ENCODE measurements at regions of chrX and their contacts with region 1.

Region 1: GRCh38 chrX:2690856-2691542 is at the start of gene CD99:
- DNase-seq: peak; percentile 94
- ATAC-seq: peak; percentile 96 to 97
- total RNA-seq, gene CD99: 242 to 317 TPM

Region 2: DNA sequence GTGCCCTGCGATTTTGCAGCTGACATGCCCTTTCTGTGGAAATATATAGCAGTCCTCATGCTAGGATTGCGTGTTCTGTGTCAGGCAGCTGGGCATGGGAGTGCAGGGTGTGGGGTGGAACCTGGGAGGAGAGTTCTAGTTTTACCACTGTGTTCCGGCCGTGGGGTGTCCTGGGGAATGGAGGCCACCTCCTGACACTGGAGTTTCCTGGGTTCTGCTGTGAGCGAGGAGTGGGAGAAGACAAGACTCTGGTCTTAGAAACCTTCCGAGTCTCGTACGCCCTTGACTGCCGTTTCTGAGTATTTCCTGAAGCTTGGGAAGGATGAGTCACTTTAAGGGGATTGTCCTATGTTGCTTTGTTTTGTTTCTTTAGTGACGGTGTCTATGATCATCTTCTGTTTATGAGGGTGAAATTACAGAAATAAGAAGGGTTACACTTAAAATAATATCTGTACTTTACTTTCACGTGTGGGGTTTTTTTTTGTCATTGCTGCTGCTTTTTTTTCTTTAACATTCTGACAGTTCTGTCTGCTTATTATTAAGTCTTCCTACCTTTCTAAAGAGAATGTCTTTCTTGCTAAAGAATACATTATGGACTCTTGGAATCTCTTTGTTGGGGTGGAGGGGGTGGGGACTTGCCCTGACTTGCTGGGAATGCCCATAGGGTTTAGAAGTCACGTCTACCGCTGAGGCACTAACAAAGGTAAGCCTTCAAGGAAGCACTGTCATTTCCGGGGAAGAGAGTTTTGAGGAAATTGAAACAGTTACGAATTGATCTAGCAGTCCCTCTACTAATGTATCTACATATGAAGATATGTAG is 19.3 kb after region 1 on chrX:
- intact Hi-C with region 1: loop called in 1 of 2 experiments (anchors 1 kb)
- DNase-seq: no peak
- ATAC-seq: peak; percentile 21 to 56

Region 3: DNA sequence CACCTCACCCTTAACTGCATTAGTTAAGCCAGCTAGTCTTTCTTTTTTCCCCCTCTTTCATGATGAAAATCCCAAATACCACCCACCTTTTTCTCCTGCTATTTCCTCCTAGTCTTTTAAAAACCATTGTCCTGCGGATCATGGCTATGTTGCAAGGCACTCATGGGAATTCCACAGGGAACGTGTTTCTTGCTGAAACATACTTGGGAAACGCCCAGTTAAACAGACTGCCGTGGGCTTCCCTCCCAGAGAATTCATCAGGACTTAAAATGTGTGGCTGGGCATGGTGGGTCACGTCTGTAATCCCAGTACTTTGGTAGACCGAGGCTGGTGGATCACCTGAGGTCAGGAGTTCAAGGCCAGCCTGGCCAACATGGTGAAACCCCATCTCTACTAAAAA is 93.0 kb after region 1 on chrX:
- intact Hi-C with region 1: no loop called
- DNase-seq: peak; percentile 29
- ATAC-seq: no peak

Region 4: GRCh38 chrX:2794336-2794735 is 103.3 kb after region 1 on chrX:
- intact Hi-C with region 1: no loop called
- DNase-seq: no peak
- ATAC-seq: no peak